Panc1 (cell line): ENCODE measurements at regions of chr12 and their contacts with region 1.

Region 1: DNA sequence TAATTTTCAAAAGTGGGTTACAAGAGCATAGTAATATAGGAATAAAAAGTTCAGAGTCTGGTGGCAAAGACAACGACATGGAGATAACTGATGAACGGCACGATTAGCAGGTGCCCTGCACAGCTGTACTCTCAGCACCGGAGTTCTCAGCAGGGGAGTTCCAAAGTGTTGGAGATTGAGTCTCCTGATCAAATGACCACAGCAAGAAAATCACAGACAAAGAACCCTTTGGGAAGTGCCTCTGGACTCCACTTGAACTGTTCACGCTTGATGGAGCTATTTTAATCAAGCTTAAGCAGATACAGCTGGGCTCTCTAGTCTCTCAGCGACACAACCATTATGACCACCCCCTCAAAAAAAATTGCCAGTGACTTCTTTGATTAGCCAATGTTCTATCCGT is 153.1 kb downstream of the ALG10B start:
- DNase-seq: no peak
- ATAC-seq: no peak
- H3K4me3 ChIP-seq: no peak overlapping the region
- H3K27ac ChIP-seq: no peak overlapping the region
- H3K4me1 ChIP-seq: no peaks in the 10 kb centered on the region
- H3K27me3 ChIP-seq: no peaks in the 10 kb centered on the region
- CTCF ChIP-seq: no peak

Region 2: DNA sequence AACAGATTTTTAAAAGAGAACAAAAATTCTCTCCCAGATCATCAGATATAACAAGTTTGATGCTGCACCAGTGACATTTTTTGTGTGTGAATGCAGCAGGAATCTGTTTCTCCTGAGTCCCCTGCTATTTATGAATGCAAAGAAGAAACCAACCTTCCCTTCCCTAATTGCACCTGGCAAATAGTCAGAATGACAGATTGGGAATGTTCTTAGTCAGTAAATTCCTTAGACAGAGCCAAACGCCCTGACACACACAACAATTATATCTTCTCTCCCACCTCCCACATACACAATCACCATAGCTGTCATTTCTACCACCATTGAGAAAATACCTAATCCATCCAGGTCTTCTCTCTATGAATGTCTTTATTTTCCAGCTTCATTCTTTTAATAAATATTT is 21.2 kb after region 1 on chr12:
- CTCF ChIA-PET with region 1: no interaction called
- POLR2A ChIA-PET with region 1: interaction called, 10 read pairs
- in situ Hi-C with region 1: no loop called
- intact Hi-C with region 1: no loop called
- DNase-seq: no peak
- ATAC-seq: no peak
- H3K4me3 ChIP-seq: no peak overlapping the region
- H3K27ac ChIP-seq: no peak overlapping the region
- H3K4me1 ChIP-seq: no peaks in the 10 kb centered on the region
- H3K27me3 ChIP-seq: no peaks in the 10 kb centered on the region
- CTCF ChIP-seq: no peak

Region 3: GRCh38 chr12:39402922-39403321 is 933.2 kb after region 1 on chr12:
- CTCF ChIA-PET with region 1: no interaction called
- POLR2A ChIA-PET with region 1: no interaction called
- in situ Hi-C with region 1: no loop called
- intact Hi-C with region 1: no loop called
- DNase-seq: no peak
- ATAC-seq: no peak
- H3K4me3 ChIP-seq: no peak overlapping the region
- H3K27ac ChIP-seq: no peak overlapping the region
- H3K4me1 ChIP-seq: no peaks in the 10 kb centered on the region
- H3K27me3 ChIP-seq: no peaks in the 10 kb centered on the region
- CTCF ChIP-seq: no peak